ENCODE measurements at regions of chr3 and their contacts with region 1.

Region 1: DNA sequence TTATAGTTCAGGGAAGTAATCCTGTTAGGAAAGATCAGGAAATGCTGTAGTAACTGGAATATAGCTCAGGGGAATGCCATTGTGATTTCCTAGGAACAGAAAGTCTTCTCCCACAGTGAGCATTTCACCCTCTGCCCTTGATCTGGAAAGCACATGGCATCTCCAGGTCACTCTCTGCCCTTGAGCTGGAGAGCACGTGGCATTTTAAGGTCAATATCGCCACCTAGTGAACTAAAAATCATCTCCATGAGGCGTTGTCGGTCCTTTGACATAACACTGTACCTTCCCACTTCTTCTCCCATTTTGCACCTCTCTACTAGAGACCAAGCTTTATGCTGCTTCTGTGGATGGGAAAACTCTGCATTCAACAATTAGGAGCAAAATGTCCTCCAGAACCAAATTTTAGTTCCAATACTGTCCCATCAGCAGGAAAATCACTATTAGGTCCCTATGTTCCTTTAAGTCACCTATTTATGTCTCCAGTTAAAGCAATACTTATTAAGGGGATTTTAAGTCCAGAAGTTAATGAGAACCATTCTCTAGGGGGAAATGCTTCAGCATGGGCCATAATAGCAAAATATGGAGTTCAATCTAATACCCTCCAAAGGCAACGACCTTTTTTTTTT is 54.7 kb upstream of the GK5 start:
- DNase-seq: peak; percentile 84
- H3K4me3 ChIP-seq: no peak overlapping the region
- H3K27ac ChIP-seq: no peak overlapping the region
- H3K4me1 ChIP-seq: peaks cover 22% of the 10 kb centered on the region
- H3K27me3 ChIP-seq: no peaks in the 10 kb centered on the region

Region 2: GRCh38 chr3:142129516-142130171 is 150.4 kb before region 1 on chr3:
- in situ Hi-C with region 1: loop called (anchors 10 kb)
- DNase-seq: no peak
- H3K4me3 ChIP-seq: no peak overlapping the region
- H3K27ac ChIP-seq: no peak overlapping the region
- H3K4me1 ChIP-seq: no peaks in the 10 kb centered on the region
- H3K27me3 ChIP-seq: no peaks in the 10 kb centered on the region

Region 3: DNA sequence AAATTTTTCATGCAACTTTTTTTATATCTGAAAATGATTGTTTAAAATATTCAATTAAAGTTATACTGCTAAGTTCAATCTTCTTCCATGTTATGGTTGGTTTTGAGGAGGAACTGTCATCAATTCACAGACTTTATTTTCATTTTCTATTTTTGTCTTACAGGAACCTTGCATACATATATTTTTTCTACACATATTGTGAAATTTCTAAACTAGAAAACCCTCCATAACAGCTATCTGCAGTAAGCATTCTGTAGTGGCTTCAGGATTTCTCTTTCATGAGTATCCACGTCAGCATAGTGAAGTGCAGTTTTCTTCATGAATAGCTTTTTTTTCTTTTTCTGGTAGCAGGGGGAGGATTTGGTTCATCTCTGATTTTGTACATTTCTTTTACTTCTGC is 250.2 kb after region 1 on chr3:
- in situ Hi-C with region 1: no loop called
- DNase-seq: no peak
- H3K4me3 ChIP-seq: no peak overlapping the region
- H3K27ac ChIP-seq: no peak overlapping the region
- H3K4me1 ChIP-seq: no peaks in the 10 kb centered on the region
- H3K27me3 ChIP-seq: no peaks in the 10 kb centered on the region

Region 4: GRCh38 chr3:142645236-142645793 is 365.2 kb after region 1 on chr3:
- in situ Hi-C with region 1: no loop called
- DNase-seq: peak; percentile 57
- H3K4me3 ChIP-seq: no peak overlapping the region
- H3K27ac ChIP-seq: no peak overlapping the region
- H3K4me1 ChIP-seq: peaks cover 9% of the 10 kb centered on the region; the same call in 1 of the 2 replicates
- H3K27me3 ChIP-seq: no peaks in the 10 kb centered on the region